ENCODE measurements at regions of chr22 and their contacts with region 1.

Region 1: GRCh38 chr22:28051787-28052356 is 132.8 kb upstream of the PITPNB start:
- DNase-seq: peak; percentile 78

Region 2: GRCh38 chr22:28019881-28020871 is 31.7 kb before region 1 on chr22:
- CTCF ChIA-PET with region 1: interaction called, 11 read pairs
- POLR2A ChIA-PET with region 1: no interaction called
- DNase-seq: peak; percentile 89